Activated T-helper 1 cell treated with anti-CD3 and anti-CD28 coated beads, Interleukin-12 subunit alpha, Interleukin-12 subunit beta, Interleukin-2, Interleukin-4 antibody, amounts not matched to agents 30 ng/mL and 10 ng/mL and 1 ng/mL, durations not matched to agents 14 hours and 24 hours and 36 hours (primary cell): ENCODE measurements at regions of chr10 and their contacts with region 1.

Region 1: GRCh38 chr10:89643431-89644331 is 1.4 kb downstream of the PANK1 start:
- DNase-seq: peak; percentile 68
- H3K4me3 Mint-ChIP-seq: no peak overlapping the region
- H3K27ac Mint-ChIP-seq: no peak overlapping the region
- H3K4me1 Mint-ChIP-seq: peaks cover 7% of the 10 kb centered on the region
- H3K27me3 Mint-ChIP-seq: peaks cover 14% of the 10 kb centered on the region

Region 2: DNA sequence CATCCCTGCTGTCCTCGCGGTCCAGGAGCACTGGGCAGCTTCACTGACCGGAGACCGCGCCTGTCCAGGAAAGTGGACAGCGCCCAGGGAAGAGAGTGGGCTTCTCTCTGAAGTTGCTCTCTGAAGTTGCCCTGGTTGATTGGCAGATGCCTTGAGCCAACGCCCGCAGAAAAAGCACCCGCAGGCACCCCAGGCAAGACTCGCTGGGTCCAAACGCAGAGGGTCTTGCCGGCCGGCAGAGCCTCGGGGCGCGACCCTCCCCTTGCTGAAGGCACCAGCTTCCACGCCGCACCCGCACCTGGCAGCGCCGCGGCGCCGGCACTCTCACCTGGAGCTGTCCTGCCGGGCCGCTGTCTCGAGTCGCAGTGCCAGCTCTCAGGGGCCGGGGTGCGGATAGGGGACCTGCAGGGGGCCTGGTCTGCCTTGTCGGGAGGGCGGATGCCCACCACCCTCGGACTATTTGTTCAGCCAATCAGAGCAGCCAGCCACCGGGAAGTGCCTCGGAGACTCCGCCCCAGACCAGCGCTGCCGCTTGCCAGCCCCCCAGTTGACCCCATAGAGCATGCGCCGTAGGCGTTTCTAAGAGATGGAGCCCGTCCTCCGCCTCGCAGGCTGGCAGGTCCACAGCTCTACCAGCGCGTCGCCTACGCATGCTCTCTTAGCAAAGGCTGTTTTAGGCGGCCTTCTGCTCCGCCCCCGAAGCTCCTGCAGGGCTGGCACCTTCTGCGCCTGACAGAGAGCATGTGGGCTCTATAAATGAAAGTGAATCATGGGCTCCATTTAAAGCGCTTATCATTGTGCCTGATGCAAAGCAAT is 392.1 kb before region 1 on chr10 and contains the start of gene LIPA:
- intact Hi-C with region 1: loop called (anchors 5 kb)
- DNase-seq: peak; percentile 86
- H3K4me3 Mint-ChIP-seq: peak within 1 kb of the TSS; percentile 84
- H3K27ac Mint-ChIP-seq: peak within 1 kb of the TSS; percentile 55
- H3K4me1 Mint-ChIP-seq: peaks cover 10% of the 10 kb centered on the region
- H3K27me3 Mint-ChIP-seq: peaks cover 9% of the 10 kb centered on the region
- total RNA-seq, gene LIPA: 5.3 and 6.2 TPM in 2 replicates

Region 3: GRCh38 chr10:89296220-89296648 is 347.4 kb before region 1 on chr10:
- intact Hi-C with region 1: loop called (anchors 1 kb)
- DNase-seq: no peak
- H3K4me3 Mint-ChIP-seq: no peak overlapping the region
- H3K27ac Mint-ChIP-seq: no peak overlapping the region
- H3K4me1 Mint-ChIP-seq: peaks cover 15% of the 10 kb centered on the region
- H3K27me3 Mint-ChIP-seq: peaks cover 20% of the 10 kb centered on the region

Region 4: GRCh38 chr10:89609833-89610346 is 33.8 kb before region 1 on chr10:
- intact Hi-C with region 1: loop called (anchors 2 kb)
- DNase-seq: no peak
- H3K4me3 Mint-ChIP-seq: no peak overlapping the region
- H3K27ac Mint-ChIP-seq: peak overlapping the region; percentile 29
- H3K4me1 Mint-ChIP-seq: peaks cover 26% of the 10 kb centered on the region
- H3K27me3 Mint-ChIP-seq: peaks cover 3% of the 10 kb centered on the region

Region 5: DNA sequence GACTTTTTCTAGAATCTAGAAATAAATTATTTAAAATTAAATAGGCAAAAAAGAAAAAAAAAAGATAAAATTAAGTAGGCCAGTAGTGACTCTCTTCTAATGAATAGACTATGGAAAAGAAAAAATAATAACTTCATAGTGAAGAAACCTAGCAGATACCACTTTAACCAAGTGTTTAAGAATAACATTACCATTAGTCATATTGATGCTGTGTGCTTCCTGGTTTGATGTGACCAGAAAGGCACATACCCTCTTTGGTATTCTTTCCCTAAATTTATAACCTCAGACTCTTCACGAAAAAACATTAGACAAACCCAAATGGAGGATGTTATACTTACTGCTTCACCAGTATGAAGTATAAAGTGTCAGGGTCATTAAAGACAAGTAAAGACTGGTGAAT is 100.3 kb after region 1 on chr10:
- intact Hi-C with region 1: no loop called
- DNase-seq: no peak
- H3K4me3 Mint-ChIP-seq: no peak overlapping the region
- H3K27ac Mint-ChIP-seq: no peak overlapping the region
- H3K4me1 Mint-ChIP-seq: peaks cover 23% of the 10 kb centered on the region
- H3K27me3 Mint-ChIP-seq: no peaks in the 10 kb centered on the region